Mammary epithelial cell (primary cell): ENCODE measurements at regions of chr18 and their contacts with region 1.

Region 1: DNA sequence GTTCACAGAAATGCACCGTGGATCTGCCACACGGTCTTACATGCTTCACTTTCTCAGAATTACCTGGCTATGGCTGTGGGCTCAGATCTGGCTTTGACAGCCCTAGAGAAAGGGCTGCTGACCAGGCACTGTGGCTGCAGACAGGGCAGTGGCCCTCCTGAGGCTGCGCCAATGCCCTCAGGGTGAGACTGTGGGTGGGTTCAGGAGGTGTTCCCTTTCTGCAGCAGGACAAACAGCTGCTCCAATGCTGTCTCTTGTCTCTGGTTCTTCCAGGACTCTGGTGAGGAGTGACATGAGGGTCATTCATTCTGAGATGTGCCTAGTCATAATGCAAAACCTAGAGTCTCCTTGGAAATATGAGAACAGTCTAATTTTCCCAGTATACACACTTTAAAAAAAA is 90.5 kb upstream of the SMIM21 start:
- DNase-seq: no peak
- H3K4me3 ChIP-seq: no peak overlapping the region
- H3K27ac ChIP-seq: no peak overlapping the region
- H3K4me1 ChIP-seq: no peaks in the 10 kb centered on the region
- H3K27me3 ChIP-seq: no peaks in the 10 kb centered on the region
- CTCF ChIP-seq: no peak

Region 2: GRCh38 chr18:75364512-75365253 is 153.3 kb before region 1 on chr18:
- CTCF ChIA-PET with region 1: no interaction called
- dilution Hi-C with region 1: no loop called
- in situ Hi-C with region 1: no loop called
- intact Hi-C with region 1: no loop called
- DNase-seq: no peak
- H3K4me3 ChIP-seq: no peak overlapping the region
- H3K27ac ChIP-seq: no peak overlapping the region
- H3K4me1 ChIP-seq: no peaks in the 10 kb centered on the region
- H3K27me3 ChIP-seq: no peaks in the 10 kb centered on the region
- CTCF ChIP-seq: no peak

Region 3: DNA sequence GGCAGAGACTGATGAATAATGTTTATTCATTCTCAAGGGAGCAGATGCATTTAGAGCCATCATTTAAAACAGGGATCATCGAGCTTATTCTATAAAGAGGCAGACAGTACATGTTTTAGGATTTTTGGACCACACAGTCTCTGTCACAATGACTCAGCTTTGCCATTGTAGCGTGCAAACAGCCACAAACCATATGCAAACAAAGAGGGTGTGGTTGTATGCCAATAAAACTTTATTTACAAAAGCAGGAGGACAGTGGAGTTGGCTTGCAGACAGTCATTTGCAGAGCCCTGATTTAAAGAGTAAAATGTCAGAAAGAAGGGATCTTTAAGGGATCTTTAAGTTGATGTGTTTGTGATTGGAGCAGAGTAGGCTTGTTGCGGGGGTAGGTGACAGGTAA is 142.0 kb before region 1 on chr18:
- CTCF ChIA-PET with region 1: no interaction called
- dilution Hi-C with region 1: no loop called
- in situ Hi-C with region 1: no loop called
- intact Hi-C with region 1: no loop called
- DNase-seq: no peak
- H3K4me3 ChIP-seq: no peak overlapping the region
- H3K27ac ChIP-seq: no peak overlapping the region
- H3K4me1 ChIP-seq: no peaks in the 10 kb centered on the region
- H3K27me3 ChIP-seq: peaks cover 1% of the 10 kb centered on the region
- CTCF ChIP-seq: no peak

Region 4: GRCh38 chr18:75462178-75462832 is 55.7 kb before region 1 on chr18:
- CTCF ChIA-PET with region 1: no interaction called
- dilution Hi-C with region 1: loop called (anchors 5 kb)
- in situ Hi-C with region 1: no loop called
- intact Hi-C with region 1: no loop called
- DNase-seq: no peak
- H3K4me3 ChIP-seq: no peak overlapping the region
- H3K27ac ChIP-seq: no peak overlapping the region
- H3K4me1 ChIP-seq: no peaks in the 10 kb centered on the region
- H3K27me3 ChIP-seq: no peaks in the 10 kb centered on the region
- CTCF ChIP-seq: no peak

Region 5: DNA sequence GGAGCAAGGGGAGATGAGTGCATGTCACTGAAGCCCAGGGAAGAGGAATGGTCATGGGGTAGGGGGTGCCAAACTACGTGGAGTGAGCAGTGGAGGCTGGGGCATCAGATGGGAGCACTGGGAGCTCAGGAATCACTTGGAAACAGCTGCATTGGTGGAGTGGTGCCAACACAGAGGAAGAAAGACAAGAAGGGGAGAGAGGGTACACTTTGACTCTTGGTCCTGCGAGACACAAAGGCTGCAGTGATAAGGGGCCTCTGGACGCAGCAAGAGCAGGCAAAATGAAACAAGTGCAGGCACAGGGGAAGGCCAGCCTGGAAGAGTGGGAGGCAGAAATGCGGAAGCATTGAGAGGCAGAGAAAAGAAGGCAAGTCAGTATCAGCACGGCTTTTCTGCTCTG is 44.2 kb after region 1 on chr18:
- CTCF ChIA-PET with region 1: no interaction called
- dilution Hi-C with region 1: no loop called
- in situ Hi-C with region 1: no loop called
- intact Hi-C with region 1: no loop called
- DNase-seq: no peak
- H3K4me3 ChIP-seq: no peak overlapping the region
- H3K27ac ChIP-seq: no peak overlapping the region
- H3K4me1 ChIP-seq: no peaks in the 10 kb centered on the region
- H3K27me3 ChIP-seq: no peaks in the 10 kb centered on the region
- CTCF ChIP-seq: no peak

Region 6: GRCh38 chr18:75574187-75574586 is 56.2 kb after region 1 on chr18:
- CTCF ChIA-PET with region 1: no interaction called
- dilution Hi-C with region 1: no loop called
- in situ Hi-C with region 1: no loop called
- intact Hi-C with region 1: loop called (anchors 10 kb)
- DNase-seq: no peak
- H3K4me3 ChIP-seq: no peak overlapping the region
- H3K27ac ChIP-seq: no peak overlapping the region
- H3K4me1 ChIP-seq: no peaks in the 10 kb centered on the region
- H3K27me3 ChIP-seq: no peaks in the 10 kb centered on the region
- CTCF ChIP-seq: no peak